Calu3 (cell line): ENCODE measurements at regions of chr12 and their contacts with region 1.

Region 1: GRCh38 chr12:25997201-25997963 is 38.9 kb downstream of the RASSF8 start:
- DNase-seq: no peak
- H3K4me3 Mint-ChIP-seq: no peak overlapping the region
- H3K27ac Mint-ChIP-seq: no peak overlapping the region
- H3K4me1 Mint-ChIP-seq: peaks cover 5% of the 10 kb centered on the region
- H3K27me3 Mint-ChIP-seq: no peaks in the 10 kb centered on the region
- CTCF ChIP-seq: no peak

Region 2: DNA sequence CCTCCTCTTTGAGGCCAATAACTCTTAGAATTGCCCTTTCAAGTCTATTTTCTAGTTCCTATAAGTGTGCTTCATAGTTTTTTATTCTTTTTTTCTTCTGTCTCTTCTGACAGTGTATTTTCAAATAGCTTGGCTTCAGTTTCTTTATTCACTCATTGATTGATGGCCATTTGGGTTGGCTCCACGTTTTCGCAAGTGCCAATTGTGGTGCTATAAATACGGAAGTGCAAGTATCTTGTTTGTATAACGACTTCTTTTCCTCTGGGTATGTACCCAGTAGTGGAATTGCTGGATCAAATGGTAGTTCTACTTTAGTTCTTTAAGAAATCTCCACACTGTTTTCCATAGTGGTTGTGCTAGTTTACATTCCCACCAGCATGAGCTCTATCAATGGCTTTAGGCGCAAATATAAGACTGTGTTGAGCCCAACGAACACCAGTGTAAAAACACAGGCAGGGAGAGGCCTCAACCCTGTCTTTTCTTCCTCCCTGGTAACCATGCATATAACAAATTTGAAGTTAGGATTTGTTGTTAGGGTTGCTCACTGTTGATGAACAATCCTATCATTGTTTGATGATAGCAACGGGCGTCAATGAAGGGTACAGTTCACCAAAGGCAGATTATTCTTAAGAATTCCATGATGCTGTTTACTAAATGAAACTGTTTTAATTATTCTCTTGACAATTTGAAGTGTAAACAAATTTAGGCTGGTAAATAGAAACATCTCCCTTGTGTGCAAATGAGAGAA is 431.0 kb before region 1 on chr12:
- CTCF ChIA-PET with region 1: no interaction called
- intact Hi-C with region 1: no loop called
- DNase-seq: no peak
- H3K4me3 Mint-ChIP-seq: no peak overlapping the region
- H3K27ac Mint-ChIP-seq: no peak overlapping the region
- H3K4me1 Mint-ChIP-seq: no peaks in the 10 kb centered on the region
- H3K27me3 Mint-ChIP-seq: no peaks in the 10 kb centered on the region
- CTCF ChIP-seq: no peak

Region 3: GRCh38 chr12:25960143-25960542 is 37.2 kb before region 1 on chr12:
- CTCF ChIA-PET with region 1: no interaction called
- intact Hi-C with region 1: loop called (anchors 5 kb)
- DNase-seq: peak; percentile 15
- H3K4me3 Mint-ChIP-seq: peak overlapping the region; percentile 82
- H3K27ac Mint-ChIP-seq: peak overlapping the region; percentile 56
- H3K4me1 Mint-ChIP-seq: peaks cover 25% of the 10 kb centered on the region
- H3K27me3 Mint-ChIP-seq: no peaks in the 10 kb centered on the region
- CTCF ChIP-seq: no peak

Region 4: GRCh38 chr12:26068503-26068902 is 71.1 kb after region 1 on chr12:
- CTCF ChIA-PET with region 1: no interaction called
- intact Hi-C with region 1: no loop called
- DNase-seq: no peak
- H3K4me3 Mint-ChIP-seq: no peak overlapping the region
- H3K27ac Mint-ChIP-seq: no peak overlapping the region
- H3K4me1 Mint-ChIP-seq: no peaks in the 10 kb centered on the region
- H3K27me3 Mint-ChIP-seq: no peaks in the 10 kb centered on the region
- CTCF ChIP-seq: no peak

Region 5: GRCh38 chr12:26576266-26576665 is 578.9 kb after region 1 on chr12:
- CTCF ChIA-PET with region 1: no interaction called
- intact Hi-C with region 1: no loop called
- DNase-seq: no peak
- H3K4me3 Mint-ChIP-seq: no peak overlapping the region
- H3K27ac Mint-ChIP-seq: no peak overlapping the region
- H3K4me1 Mint-ChIP-seq: no peaks in the 10 kb centered on the region
- H3K27me3 Mint-ChIP-seq: peaks cover 18% of the 10 kb centered on the region
- CTCF ChIP-seq: no peak